Heart right ventricle (tissue), 16 donors: ENCODE measurements at regions of chr10 and their contacts with region 1.

Region 1: GRCh38 chr10:110311357-110311949 is 6.7 kb upstream of the SMNDC1 start:
- DNase-seq: peak; percentile 17 to 55
- ATAC-seq: peak in 7 of 8 donors; percentile 71 to 90 (median 80)
- H3K4me3 ChIP-seq: no peak overlapping the region
- H3K27ac ChIP-seq: peak overlapping the region in 2 of 10 donors; percentile 38 to 41
- H3K4me1 ChIP-seq: peaks cover 0 to 26% (median 1%) of the 10 kb centered on the region in 9 donors
- H3K27me3 ChIP-seq: no peaks in the 10 kb centered on the region
- CTCF ChIP-seq: peak; percentile 50 to 80 (median 66)

Region 2: GRCh38 chr10:110535958-110536891 is 224.8 kb after region 1 on chr10:
- intact Hi-C with region 1: loop called in 2 of 10 experiments (anchors 2 to 5 kb)
- DNase-seq: peak in 1 of 2 donors; percentile 43
- ATAC-seq: peak; percentile 54 to 86 (median 69)
- H3K4me3 ChIP-seq: no peak overlapping the region
- H3K27ac ChIP-seq: no peak overlapping the region
- H3K4me1 ChIP-seq: peaks cover 0 to 26% (median 5%) of the 10 kb centered on the region in 9 donors
- H3K27me3 ChIP-seq: no peaks in the 10 kb centered on the region
- CTCF ChIP-seq: peak in 7 of 9 donors; percentile 29 to 69 (median 60)

Region 3: DNA sequence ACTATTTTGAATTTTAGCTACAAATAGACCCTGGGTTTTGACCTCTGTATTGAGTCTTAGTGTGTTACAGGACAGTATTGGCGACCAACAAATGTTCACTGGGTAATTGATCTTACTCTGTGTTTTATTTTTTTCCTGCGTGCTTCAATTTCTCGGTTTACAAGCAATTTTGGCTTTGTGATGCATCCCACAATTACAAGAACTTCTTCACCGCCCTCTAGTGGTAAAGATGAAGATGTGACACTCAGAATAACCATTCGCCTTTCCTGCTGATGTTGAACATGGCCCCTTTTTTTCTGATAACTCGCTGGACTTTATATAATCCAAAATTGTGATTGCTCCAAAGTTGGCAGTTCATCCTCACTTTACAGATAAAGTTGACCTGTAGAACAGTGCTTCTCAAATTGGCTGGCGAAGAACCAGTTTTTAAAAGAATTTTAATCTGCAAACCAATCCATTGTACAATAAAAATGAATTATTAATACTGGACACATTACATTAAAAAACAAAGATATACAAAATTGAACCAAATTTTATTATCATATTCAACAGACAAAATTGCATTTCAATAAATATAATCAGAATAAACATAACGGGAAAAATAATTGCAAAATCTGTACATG is 235.8 kb after region 1 on chr10:
- intact Hi-C with region 1: loop called in 8 of 10 experiments (anchors 1 to 5 kb)
- DNase-seq: peak in 1 of 2 donors; percentile 12
- ATAC-seq: peak in 6 of 8 donors; percentile 66 to 80 (median 76)
- H3K4me3 ChIP-seq: no peak overlapping the region
- H3K27ac ChIP-seq: no peak overlapping the region
- H3K4me1 ChIP-seq: peaks cover 0 to 14% (median 0%) of the 10 kb centered on the region in 9 donors
- H3K27me3 ChIP-seq: peaks cover 0 to 15% (median 0%) of the 10 kb centered on the region in 7 donors
- CTCF ChIP-seq: peak; percentile 72 to 88 (median 81)

Region 4: DNA sequence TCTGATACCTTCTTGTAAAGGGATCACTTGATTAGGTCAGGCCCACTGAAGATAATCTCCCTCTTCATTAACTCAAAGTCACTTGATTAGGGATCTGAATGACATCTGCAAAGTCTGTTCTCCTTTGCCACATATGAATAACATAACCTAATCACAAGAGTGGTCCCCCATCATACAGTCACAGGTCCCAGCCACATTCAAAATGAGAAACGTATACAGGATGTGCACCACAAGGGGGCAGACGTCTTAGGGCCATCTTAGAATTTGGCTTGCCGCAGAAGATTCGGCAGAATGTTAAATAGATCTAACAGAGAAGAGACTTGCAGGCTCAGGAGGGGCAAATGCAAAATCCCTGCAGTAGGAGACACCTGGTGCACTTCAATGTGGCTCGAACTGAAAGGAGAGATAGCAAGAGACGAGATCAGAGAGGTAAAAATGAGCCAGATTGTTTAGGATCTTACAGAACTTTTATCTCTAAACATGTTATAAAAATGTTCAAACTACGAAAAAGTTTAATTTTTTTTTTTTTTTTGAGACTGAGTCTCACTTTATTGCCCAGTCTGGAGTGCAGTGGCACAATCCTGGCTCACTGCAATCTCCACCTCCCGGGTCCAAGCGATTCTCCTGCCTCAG is 245.6 kb after region 1 on chr10:
- intact Hi-C with region 1: loop called in 2 of 10 experiments (anchors 5 kb)
- DNase-seq: peak in 1 of 2 donors; percentile 25
- ATAC-seq: peak in 2 of 8 donors; percentile 52 to 62
- H3K4me3 ChIP-seq: no peak overlapping the region
- H3K27ac ChIP-seq: no peak overlapping the region
- H3K4me1 ChIP-seq: no peaks in the 10 kb centered on the region
- H3K27me3 ChIP-seq: peaks cover 0 to 4% (median 0%) of the 10 kb centered on the region in 7 donors
- CTCF ChIP-seq: peak; percentile 36 to 79 (median 71)

Region 5: GRCh38 chr10:110600487-110601101 is 289.1 kb after region 1 on chr10:
- intact Hi-C with region 1: loop called in 1 of 10 experiments (anchors 5 kb)
- DNase-seq: no peak
- ATAC-seq: no peak
- H3K4me3 ChIP-seq: no peak overlapping the region
- H3K27ac ChIP-seq: no peak overlapping the region
- H3K4me1 ChIP-seq: no peaks in the 10 kb centered on the region
- H3K27me3 ChIP-seq: no peaks in the 10 kb centered on the region
- CTCF ChIP-seq: peak in 7 of 9 donors; percentile 34 to 58 (median 50)